ENCODE measurements at regions of chr7 and their contacts with region 1.

Region 1: DNA sequence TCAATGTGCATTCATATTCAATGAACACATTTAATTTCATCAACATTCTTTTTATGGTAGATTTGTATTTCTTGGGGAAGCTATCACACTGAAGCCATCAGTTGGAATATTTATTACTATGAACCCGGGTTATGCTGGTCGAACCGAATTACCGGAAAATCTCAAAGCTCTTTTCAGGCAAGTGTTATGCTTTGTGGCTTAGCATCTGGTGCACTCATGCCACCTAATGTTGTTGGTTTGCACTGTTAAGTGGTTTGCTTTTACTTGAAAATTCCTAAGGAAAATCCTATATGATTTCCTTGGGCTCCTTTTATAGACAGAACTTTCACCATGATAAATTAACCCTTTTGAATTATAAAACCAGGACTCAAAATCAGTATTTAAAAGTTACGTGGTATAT is 147.9 kb downstream of the DNAH11 start:
- DNase-seq: no peak
- ATAC-seq: no peak
- H3K4me3 ChIP-seq: no peak overlapping the region
- H3K27ac ChIP-seq: no peak overlapping the region
- H3K4me1 ChIP-seq: no peaks in the 10 kb centered on the region
- H3K27me3 ChIP-seq: no peaks in the 10 kb centered on the region
- CTCF ChIP-seq: no peak
- POLR2A ChIP-seq: no peak
- RAD21 ChIP-seq: no peak

Region 2: GRCh38 chr7:21497072-21497471 is 193.6 kb before region 1 on chr7:
- CTCF ChIA-PET with region 1: no interaction called
- POLR2A ChIA-PET with region 1: no interaction called
- dilution Hi-C with region 1: no loop called
- in situ Hi-C with region 1: no loop called
- intact Hi-C with region 1: no loop called
- DNase-seq: peak; percentile 7
- ATAC-seq: no peak; the same call in 1 of the 2 replicates
- H3K4me3 ChIP-seq: no peak overlapping the region
- H3K27ac ChIP-seq: no peak overlapping the region
- H3K4me1 ChIP-seq: no peaks in the 10 kb centered on the region
- H3K27me3 ChIP-seq: no peaks in the 10 kb centered on the region
- CTCF ChIP-seq: peak; percentile 38
- POLR2A ChIP-seq: no peak
- RAD21 ChIP-seq: peak; percentile 21; the same call in 1 of the 2 replicates

Region 3: DNA sequence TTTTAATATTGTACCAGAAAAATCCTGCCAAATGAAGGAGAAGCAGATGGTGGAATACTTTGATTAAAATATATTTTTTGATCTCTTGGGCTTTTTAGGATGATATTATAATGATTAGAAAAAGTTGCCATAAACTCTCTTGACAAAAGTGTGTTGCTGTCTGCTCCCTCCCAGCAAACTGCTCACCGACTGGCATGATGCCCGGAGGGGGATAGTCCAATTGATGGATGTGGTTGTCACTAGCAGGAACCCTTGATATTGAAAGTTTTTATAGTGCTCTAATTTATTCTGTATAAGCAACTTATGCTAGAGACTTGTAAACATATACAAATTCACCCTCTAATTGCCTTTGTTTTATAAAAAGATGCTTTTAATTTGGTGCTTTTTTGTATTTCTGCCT is 33.9 kb before region 1 on chr7:
- CTCF ChIA-PET with region 1: no interaction called
- POLR2A ChIA-PET with region 1: no interaction called
- dilution Hi-C with region 1: no loop called
- in situ Hi-C with region 1: no loop called
- intact Hi-C with region 1: loop called (anchors 2 kb)
- DNase-seq: no peak
- ATAC-seq: no peak
- H3K4me3 ChIP-seq: no peak overlapping the region
- H3K27ac ChIP-seq: no peak overlapping the region
- H3K4me1 ChIP-seq: no peaks in the 10 kb centered on the region
- H3K27me3 ChIP-seq: no peaks in the 10 kb centered on the region
- CTCF ChIP-seq: no peak
- POLR2A ChIP-seq: no peak
- RAD21 ChIP-seq: no peak